Adrenal gland (tissue), 19 donors: ENCODE measurements at regions of chr1 and their contacts with region 1.

Region 1: DNA sequence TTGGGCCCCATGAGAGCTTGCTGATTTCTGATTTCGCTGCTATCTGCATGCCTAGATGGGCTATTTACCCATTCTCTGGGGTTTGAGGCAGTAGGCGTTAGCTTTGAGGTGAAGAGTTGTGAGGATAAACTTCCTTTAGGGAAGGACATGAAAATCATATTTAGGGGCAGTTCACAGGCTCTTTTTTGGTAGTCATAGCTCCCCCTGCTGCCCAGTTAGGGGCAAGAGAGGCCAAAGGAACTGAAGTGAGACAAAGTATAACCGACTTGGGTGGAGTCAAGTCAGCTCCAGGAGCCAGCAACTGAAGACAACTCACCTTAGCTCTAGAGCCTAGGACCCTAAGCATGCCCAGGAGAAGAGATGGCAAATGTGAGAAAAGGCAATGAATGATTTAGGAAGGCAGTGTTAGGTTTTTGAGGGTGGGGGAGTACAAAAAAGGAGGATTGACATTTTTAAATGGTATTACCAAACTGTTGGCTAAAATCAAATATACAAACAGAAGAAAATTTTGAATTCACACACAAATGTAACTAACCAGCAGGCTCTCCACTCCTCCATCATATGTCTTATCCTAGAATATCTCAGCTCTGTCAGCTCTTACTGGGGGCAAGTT is 625.2 kb downstream of the LMO4 start:
- DNase-seq: peak; percentile 47 to 83 (median 60)
- H3K4me3 ChIP-seq: no peak overlapping the region
- H3K27ac ChIP-seq: no peak overlapping the region
- H3K4me1 ChIP-seq: no peaks in the 10 kb centered on the region
- H3K27me3 ChIP-seq: no peaks in the 10 kb centered on the region
- CTCF ChIP-seq: peak; percentile 54 to 78 (median 70)
- POLR2A ChIP-seq: no peak

Region 2: DNA sequence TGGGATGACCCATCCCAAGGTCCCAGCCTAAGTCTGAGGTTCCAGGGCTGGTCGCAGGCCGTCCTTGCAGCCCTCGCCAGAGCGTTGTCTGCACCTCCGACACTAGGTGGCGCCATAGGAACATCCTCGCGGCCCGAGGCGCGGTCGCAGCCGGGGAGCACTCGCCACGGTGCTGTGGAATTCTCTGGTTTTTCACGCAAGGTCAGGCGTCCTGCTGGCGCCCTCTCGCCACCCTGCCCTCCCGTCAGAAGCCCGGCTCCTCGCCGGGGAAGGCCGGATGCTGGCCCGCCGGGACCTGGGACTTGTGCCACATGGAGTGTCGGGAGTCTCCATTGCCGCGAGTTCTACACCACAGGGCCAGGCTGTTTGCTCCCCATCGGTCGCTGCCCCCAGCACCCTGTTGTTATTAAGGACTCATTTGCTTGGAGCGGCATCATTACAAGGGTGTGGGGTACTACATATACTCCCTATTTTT is 822.0 kb before region 1 on chr1:
- intact Hi-C with region 1: loop called in 1 of 2 experiments (anchors 5 kb)
- DNase-seq: peak; percentile 77 to 85 (median 78)
- H3K4me3 ChIP-seq: peak overlapping the region in 2 of 4 donors; percentile 10 to 64
- H3K27ac ChIP-seq: peak overlapping the region in 2 of 5 donors; percentile 17 to 51
- H3K4me1 ChIP-seq: peaks cover 0 to 6% of the 10 kb centered on the region in 2 donors
- H3K27me3 ChIP-seq: no peaks in the 10 kb centered on the region
- CTCF ChIP-seq: peak; percentile 68 to 91 (median 84)
- POLR2A ChIP-seq: no peak

Region 3: DNA sequence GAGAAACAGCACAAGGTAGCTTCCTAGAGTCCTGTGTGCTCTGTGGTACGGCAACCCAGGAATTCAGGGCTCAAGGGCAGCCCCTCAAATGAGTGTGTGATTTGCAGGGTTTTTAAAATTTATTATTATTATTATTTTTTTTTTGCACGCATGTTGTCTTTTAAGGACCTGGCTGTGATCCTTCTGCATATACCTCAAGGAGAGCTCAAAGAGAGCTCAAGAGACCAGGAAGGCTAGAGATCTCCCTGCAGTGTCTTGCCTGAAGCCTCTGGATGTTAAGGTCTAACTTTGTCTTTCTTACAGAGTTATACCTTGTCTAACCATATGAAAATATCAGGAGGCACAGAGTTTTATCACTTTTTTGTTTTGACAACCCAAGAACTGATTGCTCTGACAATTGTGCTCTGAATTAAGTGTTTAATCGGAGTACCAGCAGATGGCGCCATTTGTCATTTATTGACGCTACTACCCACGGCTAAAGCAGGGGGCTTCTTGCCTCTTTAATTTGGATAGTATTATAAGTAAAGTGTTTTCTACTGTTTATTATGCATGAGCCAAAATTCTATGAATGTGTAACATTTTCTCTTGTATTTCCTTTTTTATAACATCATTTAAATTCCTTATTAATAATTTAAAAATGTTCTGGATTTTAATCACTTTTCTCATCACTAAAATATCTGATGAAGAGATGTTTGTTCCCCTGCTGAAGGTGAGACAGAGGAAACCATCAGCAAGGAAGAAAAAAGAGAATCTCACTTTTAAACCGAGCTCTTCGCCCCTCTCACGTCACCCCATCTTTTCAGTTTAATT is 660.9 kb before region 1 on chr1:
- intact Hi-C with region 1: loop called in 1 of 2 experiments (anchors 5 kb)
- DNase-seq: peak; percentile 27 to 76 (median 59)
- H3K4me3 ChIP-seq: no peak overlapping the region
- H3K27ac ChIP-seq: no peak overlapping the region
- H3K4me1 ChIP-seq: no peaks in the 10 kb centered on the region
- H3K27me3 ChIP-seq: no peaks in the 10 kb centered on the region
- CTCF ChIP-seq: peak; percentile 62 to 87 (median 73)
- POLR2A ChIP-seq: no peak

Region 4: DNA sequence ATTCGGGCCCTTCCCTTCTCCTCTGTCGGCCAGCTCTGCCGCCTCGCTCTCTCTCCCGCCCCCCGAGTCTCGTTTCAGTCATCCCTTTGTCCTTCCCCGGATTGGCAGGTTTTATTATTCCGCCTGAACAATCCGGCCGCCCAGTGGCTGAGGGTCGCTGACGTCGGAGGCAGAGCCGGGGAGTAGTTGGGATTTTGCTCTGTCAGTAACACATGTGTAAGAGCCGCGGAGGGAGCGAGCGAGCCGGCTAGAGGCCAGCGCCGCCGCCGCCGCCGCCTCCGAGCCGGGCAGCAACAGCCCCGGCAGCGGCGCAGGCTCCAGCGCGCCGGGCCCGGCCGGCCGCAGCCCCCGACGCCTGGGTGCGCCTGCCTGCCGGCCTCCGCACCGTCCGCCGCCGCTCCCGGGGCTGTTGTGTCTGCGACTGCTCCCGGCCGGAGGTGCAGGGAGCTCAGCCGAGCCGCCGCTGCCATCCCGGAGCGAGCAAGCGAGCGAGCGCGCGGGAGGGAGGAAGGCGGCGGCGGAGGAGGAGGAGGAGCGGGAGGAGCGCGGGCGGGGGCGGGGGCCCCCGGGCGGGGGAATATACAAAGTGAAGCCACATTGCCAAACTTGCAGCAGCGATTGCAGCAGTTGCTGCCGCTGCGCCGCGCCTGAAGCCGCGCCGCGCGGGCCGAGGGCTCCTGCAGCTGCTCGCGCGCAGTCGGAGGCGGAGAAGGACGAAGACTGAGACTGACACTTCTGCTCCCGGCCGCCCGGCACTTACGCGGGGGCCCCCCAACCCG is 625.4 kb before region 1 on chr1 and contains the start of gene LMO4:
- intact Hi-C with region 1: loop called (anchors 10 kb)
- DNase-seq: peak; percentile 95 to 99 (median 97)
- H3K4me3 ChIP-seq: peak within 1 kb of the TSS; percentile 24 to 94 (median 86)
- H3K27ac ChIP-seq: peak within 1 kb of the TSS; percentile 76 to 96 (median 91)
- H3K4me1 ChIP-seq: peaks cover 13 to 29% of the 10 kb centered on the region in 2 donors
- H3K27me3 ChIP-seq: no peaks in the 10 kb centered on the region
- CTCF ChIP-seq: peak in 1 of 6 experiments; percentile 22
- POLR2A ChIP-seq: peak; percentile 85 to 97
- total RNA-seq, gene LMO4: 10.3 to 26.9 (median 21.4) TPM

Region 5: GRCh38 chr1:88009916-88010315 is 56.1 kb after region 1 on chr1:
- intact Hi-C with region 1: no loop called
- DNase-seq: no peak
- H3K4me3 ChIP-seq: no peak overlapping the region
- H3K27ac ChIP-seq: no peak overlapping the region
- H3K4me1 ChIP-seq: no peaks in the 10 kb centered on the region
- H3K27me3 ChIP-seq: no peaks in the 10 kb centered on the region
- CTCF ChIP-seq: no peak
- POLR2A ChIP-seq: no peak

Region 6: GRCh38 chr1:88126467-88126866 is 172.6 kb after region 1 on chr1:
- intact Hi-C with region 1: no loop called
- DNase-seq: no peak
- H3K4me3 ChIP-seq: no peak overlapping the region
- H3K27ac ChIP-seq: no peak overlapping the region
- H3K4me1 ChIP-seq: no peaks in the 10 kb centered on the region
- H3K27me3 ChIP-seq: no peaks in the 10 kb centered on the region
- CTCF ChIP-seq: no peak
- POLR2A ChIP-seq: no peak